ENCODE measurements at regions of chr17 and their contacts with region 1.

Region 1: DNA sequence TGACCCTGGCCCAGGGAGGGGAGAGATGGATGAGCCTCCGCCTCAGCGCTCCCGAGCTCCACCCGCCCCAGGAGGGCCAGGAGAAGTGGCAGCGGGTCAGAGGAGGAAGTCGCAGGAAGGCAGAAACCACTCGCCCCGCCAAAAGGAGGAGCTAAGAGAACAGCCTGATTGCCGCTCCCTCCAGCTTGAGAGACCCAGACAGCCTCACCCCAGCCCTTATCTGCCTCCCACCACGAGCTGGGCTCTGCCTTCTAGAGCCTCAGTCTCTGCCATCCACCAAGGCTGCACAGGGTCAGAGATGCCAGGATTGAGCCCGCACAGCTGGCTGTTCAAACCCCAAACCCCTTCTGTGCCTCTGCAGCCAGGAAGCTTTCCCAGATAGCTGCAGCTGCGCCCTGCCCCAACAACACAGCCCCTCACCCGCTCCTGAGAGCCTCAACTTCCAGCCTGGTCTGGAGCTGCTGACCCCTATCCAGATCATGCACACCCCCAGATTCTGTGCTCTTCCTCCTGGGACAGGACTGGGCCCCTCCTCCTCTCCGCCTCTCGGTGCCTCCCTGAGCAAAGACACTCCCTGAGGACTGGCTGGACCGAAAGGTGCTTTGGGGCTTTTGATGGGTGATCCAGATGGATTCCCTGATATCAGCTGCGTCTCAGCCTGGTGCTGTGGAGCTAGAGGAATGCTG is 1.0 kb upstream of the ATP2A3 start:
- DNase-seq: peak; percentile 93
- H3K4me3 Mint-ChIP-seq: peak overlapping the region; percentile 90
- H3K27ac Mint-ChIP-seq: peak overlapping the region; percentile 87
- H3K4me1 Mint-ChIP-seq: peaks cover 36% of the 10 kb centered on the region
- H3K27me3 Mint-ChIP-seq: no peaks in the 10 kb centered on the region

Region 2: GRCh38 chr17:3723556-3724369 is 241.5 kb before region 1 on chr17 and contains the start of gene HASPIN:
- intact Hi-C with region 1: loop called (anchors 5 kb)
- DNase-seq: peak; percentile 98
- H3K4me3 Mint-ChIP-seq: peak within 1 kb of the TSS; percentile 87
- H3K27ac Mint-ChIP-seq: peak within 1 kb of the TSS; percentile 68
- H3K4me1 Mint-ChIP-seq: peaks cover 45% of the 10 kb centered on the region
- H3K27me3 Mint-ChIP-seq: no peaks in the 10 kb centered on the region
- total RNA-seq, gene HASPIN: 25.1 and 25.3 TPM in 2 replicates

Region 3: GRCh38 chr17:3773511-3773910 is 191.8 kb before region 1 on chr17:
- intact Hi-C with region 1: no loop called
- DNase-seq: no peak
- H3K4me3 Mint-ChIP-seq: no peak overlapping the region
- H3K27ac Mint-ChIP-seq: no peak overlapping the region
- H3K4me1 Mint-ChIP-seq: peaks cover 22% of the 10 kb centered on the region
- H3K27me3 Mint-ChIP-seq: no peaks in the 10 kb centered on the region

Region 4: DNA sequence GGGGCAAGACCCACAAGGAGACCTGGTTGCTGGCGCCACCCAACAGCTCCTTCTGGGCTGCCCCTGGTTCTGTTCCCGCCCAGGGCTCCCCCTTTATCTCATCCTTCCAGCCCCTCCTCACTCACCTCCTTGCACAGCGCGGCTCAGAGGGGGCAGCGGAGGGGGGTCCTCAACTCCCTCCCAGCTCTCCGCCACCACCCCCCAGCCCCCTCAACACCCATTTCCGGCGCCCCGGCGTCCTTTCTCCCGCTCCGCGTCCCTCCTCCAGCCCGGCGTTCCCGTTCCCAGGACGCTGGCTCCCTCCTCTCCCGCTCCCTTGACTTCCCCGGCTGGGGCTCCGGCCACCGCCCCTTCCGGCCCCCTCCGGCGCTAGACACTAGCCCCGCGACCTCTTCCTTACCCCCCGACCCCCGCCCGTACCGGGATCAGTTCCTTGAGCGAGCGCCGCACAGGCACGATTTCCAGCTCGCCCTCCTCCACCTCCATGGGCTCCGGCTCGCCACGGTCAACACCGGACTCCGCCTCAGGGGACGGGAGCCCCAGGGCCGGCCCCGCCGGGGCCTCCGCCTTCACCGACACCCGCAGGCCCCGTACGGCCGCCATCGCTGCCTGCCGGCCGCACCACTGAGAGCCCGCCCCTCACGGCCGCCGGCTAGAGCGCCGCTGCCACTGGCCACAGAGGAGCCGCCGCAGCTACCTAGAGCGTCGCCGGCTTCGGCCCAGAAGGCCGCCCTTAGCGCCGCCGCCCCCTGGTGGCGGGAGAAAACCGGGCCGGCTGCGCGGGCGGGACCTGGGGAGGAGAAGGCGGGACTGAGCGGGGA is 119.4 kb before region 1 on chr17 and contains the start of gene NCBP3:
- intact Hi-C with region 1: loop called (anchors 5 kb)
- DNase-seq: peak; percentile 98
- H3K4me3 Mint-ChIP-seq: peak within 1 kb of the TSS; percentile 97
- H3K27ac Mint-ChIP-seq: peak within 1 kb of the TSS; percentile 94
- H3K4me1 Mint-ChIP-seq: peaks cover 22% of the 10 kb centered on the region
- H3K27me3 Mint-ChIP-seq: peaks cover 17% of the 10 kb centered on the region
- total RNA-seq, gene NCBP3: 45.9 and 52.1 TPM in 2 replicates

Region 5: DNA sequence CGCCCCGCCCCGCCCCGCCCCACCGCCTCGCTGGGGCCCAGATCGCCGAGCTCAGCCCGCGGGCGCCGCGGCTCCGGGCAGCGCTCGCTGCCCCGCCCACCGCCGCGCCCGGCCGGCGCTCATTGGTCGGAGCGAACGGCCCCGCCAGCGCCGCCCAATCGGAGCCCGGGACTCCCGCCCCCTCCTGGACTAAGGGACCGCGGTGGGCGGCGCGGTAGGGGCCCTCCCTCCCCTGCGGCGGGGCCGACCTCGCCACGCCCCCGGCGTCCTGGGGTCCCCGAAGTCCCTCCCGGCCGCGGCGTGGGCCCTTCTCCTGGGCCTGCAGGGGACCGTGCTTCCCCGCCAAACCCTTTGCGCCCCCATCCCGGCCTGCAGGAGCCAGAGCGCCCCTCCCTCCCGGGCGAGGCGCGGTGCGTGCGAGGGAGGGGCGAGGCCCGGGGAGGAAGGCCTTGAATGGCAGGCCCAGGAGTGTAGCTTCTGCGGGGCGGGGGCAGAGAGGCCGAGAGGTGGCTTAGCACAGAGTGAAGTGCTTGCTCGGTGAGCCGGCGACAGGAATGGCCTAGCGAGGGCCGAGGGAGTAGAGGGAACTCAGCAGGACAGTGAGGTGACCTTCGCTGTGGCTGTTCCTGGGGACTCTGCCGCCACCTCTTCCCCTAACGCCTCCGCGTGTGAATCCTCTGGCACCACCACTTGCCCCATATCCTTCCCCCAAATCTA is 72.1 kb before region 1 on chr17 and contains the start of gene CAMKK1:
- intact Hi-C with region 1: loop called (anchors 2 kb)
- DNase-seq: peak; percentile 98
- H3K4me3 Mint-ChIP-seq: peak within 1 kb of the TSS; percentile 86
- H3K27ac Mint-ChIP-seq: peak within 1 kb of the TSS; percentile 84
- H3K4me1 Mint-ChIP-seq: peaks cover 24% of the 10 kb centered on the region
- H3K27me3 Mint-ChIP-seq: peaks cover 7% of the 10 kb centered on the region
- total RNA-seq, gene CAMKK1: 8.6 and 9.2 TPM in 2 replicates

Region 6: DNA sequence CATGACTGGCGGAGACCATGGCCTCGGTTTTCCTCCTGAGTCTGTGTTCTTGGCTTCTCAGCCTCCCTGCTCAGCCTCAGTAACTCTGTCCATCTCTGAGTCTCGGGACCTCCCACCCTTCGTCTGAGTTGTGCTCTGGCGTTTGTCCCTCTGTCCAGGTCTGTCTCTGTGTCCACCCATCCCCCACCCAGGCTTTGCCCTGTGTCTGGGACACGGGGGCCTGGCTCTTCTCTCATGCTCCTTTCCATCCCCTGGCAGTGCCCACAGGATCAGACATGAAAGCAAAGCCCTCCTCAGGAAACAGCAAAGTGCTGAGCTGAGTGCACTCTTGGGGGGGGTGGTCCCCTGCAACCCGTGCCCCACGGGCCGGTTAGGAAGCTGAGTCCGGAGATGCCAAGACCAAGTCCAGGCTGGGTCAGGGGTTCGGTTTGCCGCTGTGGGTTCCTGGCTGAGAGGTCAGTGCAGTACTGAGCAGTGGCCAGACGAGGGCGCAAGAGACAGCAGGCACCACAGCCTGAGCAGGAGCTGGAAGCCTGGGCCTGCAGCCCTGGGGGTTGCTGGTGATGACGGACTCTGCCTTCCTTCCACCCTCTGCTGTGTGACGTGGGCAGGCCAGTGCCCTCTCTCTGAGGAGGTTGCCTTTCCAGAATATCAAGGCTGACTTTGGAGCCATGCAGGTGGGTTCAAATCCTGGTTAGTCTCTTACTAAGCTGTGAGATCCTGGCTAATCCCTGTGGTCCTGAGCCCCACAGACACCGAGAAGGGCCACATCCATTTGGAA is 51.5 kb before region 1 on chr17:
- intact Hi-C with region 1: loop called (anchors 2 kb)
- DNase-seq: peak; percentile 95
- H3K4me3 Mint-ChIP-seq: no peak overlapping the region
- H3K27ac Mint-ChIP-seq: peak overlapping the region; percentile 25
- H3K4me1 Mint-ChIP-seq: peaks cover 28% of the 10 kb centered on the region
- H3K27me3 Mint-ChIP-seq: no peaks in the 10 kb centered on the region

Region 7: GRCh38 chr17:4004517-4005295 is 39.4 kb after region 1 on chr17:
- intact Hi-C with region 1: loop called (anchors 2 kb)
- DNase-seq: peak; percentile 89
- H3K4me3 Mint-ChIP-seq: no peak overlapping the region
- H3K27ac Mint-ChIP-seq: no peak overlapping the region
- H3K4me1 Mint-ChIP-seq: peaks cover 7% of the 10 kb centered on the region
- H3K27me3 Mint-ChIP-seq: peaks cover 4% of the 10 kb centered on the region

Measured in activated CD4-positive, alpha-beta T cell treated with anti-CD3 and anti-CD28 coated beads, Interleukin-2, amount 10 ng/mL, durations not matched to agents 24 days and 14 days (primary cell).